AG04450 (cell line): ENCODE measurements at regions of chr3 and their contacts with region 1.

Region 1: DNA sequence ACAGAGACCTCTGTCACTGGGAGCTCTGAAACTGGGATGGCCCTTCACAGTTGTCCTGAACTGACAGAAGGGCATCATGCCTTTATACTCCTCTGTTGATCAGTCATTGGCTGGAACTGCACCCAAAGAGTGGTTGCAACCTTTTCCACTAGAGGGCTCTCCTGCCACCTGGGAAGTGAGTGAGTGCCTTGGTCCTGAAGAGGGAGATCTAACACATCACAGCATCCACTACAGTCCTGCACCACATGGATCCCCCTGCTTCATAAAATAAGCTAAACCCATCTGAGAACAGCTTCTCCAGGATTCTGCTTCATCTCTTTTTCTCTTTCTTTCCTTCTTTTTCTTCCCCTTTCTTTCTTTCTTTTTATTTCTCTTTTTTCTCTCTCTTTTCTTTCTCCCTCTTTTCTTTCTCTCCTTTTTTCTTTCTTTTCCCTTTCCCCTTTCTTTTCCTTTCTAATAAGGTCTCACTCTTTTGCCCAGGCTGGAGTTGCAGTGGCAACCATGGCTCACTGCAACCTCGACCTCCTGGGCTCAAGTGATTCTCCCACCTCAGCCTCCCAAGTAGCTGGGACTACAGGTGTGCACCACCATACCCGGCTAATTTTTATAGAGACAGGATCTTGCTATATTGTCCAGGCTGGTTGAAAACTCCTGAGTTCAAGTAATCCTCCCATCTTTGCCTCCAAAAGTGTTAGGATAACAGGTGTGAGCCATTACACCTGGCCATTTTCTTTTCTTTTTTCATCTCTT is 42.8 kb upstream of the RAF1 start:
- DNase-seq: no peak
- H3K4me3 ChIP-seq: no peak overlapping the region
- H3K27ac ChIP-seq: no peak overlapping the region
- H3K27me3 ChIP-seq: no peaks in the 10 kb centered on the region
- CTCF ChIP-seq: peak; percentile 85

Region 2: DNA sequence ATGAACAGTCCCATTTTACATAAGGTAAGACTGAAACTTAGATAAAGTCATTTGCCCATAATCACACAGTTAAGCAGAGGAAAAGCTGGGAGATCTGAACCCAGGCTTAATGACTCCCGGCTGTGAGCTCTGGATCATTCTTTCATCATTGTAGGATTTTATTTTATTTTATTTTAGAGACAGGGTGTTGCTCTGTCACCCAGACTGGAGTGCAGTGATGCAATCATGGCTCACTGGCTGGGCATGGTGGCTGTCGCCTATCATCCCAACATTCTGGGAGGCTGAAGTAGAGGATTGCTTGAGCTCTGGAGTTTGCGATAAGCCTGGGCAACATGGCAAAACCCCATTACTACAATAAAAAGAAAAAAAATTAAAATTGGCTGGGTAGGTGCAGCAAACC is 11.6 kb before region 1 on chr3:
- CTCF ChIA-PET with region 1: interaction called, 12 read pairs
- POLR2A ChIA-PET with region 1: no interaction called
- DNase-seq: no peak
- H3K4me3 ChIP-seq: no peak overlapping the region
- H3K27ac ChIP-seq: no peak overlapping the region
- H3K27me3 ChIP-seq: no peaks in the 10 kb centered on the region
- CTCF ChIP-seq: no peak

Region 3: DNA sequence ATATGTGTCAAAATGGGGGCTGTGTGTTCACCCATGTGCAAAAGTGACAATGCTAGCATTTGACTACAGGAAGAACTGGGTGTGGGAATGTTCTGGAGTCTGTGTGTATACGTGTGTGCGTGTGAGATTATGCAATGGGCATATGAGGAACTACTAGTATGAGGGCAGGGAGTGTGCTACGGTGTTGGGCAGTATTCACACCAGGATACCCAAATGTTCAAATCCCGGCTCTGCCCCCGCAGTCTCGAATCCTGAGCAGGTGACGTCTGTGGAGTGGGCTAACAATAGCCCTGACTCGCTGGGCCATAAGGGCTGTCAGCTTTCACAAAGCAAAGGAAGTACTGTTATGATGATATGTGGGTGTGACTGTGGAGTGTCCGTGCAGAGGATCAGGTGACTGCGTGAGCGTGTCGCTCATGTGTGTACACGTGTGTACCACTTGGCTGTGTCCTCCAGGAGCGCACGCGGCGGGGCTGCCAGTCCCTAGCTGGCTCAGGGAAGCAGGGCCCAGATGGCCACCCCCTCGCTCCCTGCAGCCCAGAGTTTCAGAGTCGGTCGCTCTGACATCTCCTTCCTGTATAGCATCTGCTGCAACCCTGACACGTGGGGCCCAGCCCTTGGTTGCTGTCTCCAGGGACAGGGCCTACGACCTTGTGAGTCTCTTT is 339.4 kb after region 1 on chr3:
- CTCF ChIA-PET with region 1: no interaction called
- POLR2A ChIA-PET with region 1: no interaction called
- DNase-seq: no peak
- H3K4me3 ChIP-seq: no peak overlapping the region
- H3K27ac ChIP-seq: no peak overlapping the region
- H3K27me3 ChIP-seq: peaks cover 38% of the 10 kb centered on the region
- CTCF ChIP-seq: no peak